ENCODE measurements at regions of chr3 and their contacts with region 1.

Region 1: DNA sequence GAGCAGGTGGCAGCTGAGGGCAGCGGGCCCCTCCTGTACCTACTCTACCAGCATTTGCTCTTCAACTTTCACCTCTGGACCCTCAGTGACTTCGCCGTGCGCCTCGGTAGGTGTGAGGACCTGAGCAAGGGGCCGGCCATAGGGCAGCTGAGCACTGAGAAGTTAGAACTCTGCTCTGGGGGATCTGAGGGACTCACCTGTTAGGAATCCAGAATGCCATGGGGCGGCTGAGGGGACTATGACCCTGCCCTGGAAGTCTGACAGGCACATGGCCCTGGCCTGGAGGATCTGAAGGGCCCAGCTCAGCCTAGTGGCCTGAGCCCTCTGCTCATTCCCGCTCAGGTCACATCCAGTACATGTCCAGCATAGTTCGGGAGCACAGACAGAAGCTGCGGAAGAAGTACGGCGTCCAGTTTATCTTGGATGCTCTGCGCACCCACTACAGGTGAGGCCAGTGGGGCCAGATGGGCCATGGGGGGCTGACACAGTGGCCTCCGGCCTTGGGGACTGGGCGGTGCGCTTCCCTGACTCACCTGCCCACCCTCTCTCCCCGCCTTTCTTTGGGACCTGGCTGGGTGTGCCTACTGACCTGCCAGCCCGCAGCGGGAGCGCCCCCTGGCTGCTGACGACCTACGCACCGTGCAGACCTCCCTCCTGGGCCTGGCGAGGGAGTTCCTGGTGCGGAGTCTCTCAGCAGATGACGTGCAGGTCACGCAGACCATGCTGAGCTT is 18.8 kb downstream of the NBEAL2 start:
- DNase-seq: peak; percentile 76
- ATAC-seq: peak; percentile 66
- H3K4me3 Mint-ChIP-seq: no peak overlapping the region
- H3K27ac Mint-ChIP-seq: peak overlapping the region; percentile 79
- H3K4me1 Mint-ChIP-seq: peaks cover 39% of the 10 kb centered on the region
- H3K27me3 Mint-ChIP-seq: no peaks in the 10 kb centered on the region

Region 2: DNA sequence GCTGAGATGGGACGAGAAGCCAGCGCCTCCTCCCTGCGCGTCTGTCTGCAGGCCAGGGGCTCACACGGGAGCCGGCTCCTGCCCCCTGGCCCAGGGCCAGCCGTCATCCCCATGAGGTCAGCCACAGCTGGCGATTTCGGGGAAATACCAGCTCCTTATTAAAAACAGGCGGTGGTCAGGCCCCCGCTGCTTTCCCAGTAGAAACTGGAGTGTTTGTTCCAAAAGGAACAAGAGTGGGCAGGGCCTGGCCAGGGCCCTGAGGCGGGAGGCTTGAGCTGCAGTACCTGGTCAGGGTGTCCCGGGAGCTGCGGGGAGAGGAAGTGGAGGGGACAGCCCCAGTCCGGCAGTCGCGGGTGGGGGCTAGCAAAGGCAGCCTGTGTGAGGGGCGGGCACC is 152.9 kb before region 1 on chr3:
- CTCF ChIA-PET with region 1: no interaction called
- POLR2A ChIA-PET with region 1: no interaction called
- DNase-seq: no peak
- ATAC-seq: no peak
- H3K4me3 Mint-ChIP-seq: peak overlapping the region; percentile 67
- H3K27ac Mint-ChIP-seq: peak overlapping the region; percentile 61
- H3K4me1 Mint-ChIP-seq: peaks cover 12% of the 10 kb centered on the region
- H3K27me3 Mint-ChIP-seq: peaks cover 27% of the 10 kb centered on the region

Region 3: GRCh38 chr3:46923559-46924350 is 74.5 kb before region 1 on chr3:
- CTCF ChIA-PET with region 1: interaction called, 15 read pairs
- POLR2A ChIA-PET with region 1: interaction called, 3 read pairs
- DNase-seq: peak; percentile 61
- ATAC-seq: peak; percentile 41
- H3K4me3 Mint-ChIP-seq: no peak overlapping the region
- H3K27ac Mint-ChIP-seq: peak overlapping the region; percentile 52
- H3K4me1 Mint-ChIP-seq: peaks cover 52% of the 10 kb centered on the region
- H3K27me3 Mint-ChIP-seq: no peaks in the 10 kb centered on the region

Region 4: DNA sequence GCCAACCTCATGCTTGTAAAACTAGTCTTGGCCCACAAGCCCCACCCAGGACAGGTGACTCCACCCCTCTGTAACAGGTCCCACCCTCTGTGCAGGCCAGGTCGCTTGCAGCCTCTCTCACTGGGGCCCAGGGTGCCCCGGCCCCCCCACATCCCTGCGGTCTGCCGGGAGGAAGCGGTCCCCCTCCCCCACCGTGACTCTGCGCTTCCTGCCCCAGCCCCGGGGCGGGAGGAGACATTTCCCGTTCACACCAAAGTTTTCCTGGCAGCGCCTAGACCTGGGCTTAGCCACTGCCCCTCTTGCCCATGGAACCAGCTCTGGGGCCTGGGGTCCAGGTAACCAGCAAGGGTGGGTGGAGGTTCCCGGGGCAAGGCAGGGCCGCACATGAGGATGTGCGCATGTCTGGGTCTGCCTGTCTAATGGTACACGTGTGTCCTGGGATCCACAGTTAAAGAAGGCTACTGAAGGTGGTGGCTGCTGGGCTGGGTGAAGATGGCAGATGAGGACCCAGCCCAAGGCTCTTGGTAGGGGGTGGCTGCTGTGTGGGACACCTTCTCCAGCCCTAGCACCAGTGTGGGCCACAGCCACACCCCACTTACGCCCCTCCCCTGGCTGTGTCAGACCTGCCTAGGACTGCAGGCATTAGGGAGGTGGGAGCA is 10.4 kb before region 1 on chr3:
- CTCF ChIA-PET with region 1: interaction called, 10 read pairs
- POLR2A ChIA-PET with region 1: no interaction called
- DNase-seq: peak; percentile 96
- ATAC-seq: peak; percentile 97
- H3K4me3 Mint-ChIP-seq: peak overlapping the region; percentile 80
- H3K27ac Mint-ChIP-seq: peak overlapping the region; percentile 93
- H3K4me1 Mint-ChIP-seq: peaks cover 69% of the 10 kb centered on the region
- H3K27me3 Mint-ChIP-seq: no peaks in the 10 kb centered on the region